CD4-positive, alpha-beta memory T cell (primary cell): ENCODE measurements at regions of chr1 and their contacts with region 1.

Region 1: DNA sequence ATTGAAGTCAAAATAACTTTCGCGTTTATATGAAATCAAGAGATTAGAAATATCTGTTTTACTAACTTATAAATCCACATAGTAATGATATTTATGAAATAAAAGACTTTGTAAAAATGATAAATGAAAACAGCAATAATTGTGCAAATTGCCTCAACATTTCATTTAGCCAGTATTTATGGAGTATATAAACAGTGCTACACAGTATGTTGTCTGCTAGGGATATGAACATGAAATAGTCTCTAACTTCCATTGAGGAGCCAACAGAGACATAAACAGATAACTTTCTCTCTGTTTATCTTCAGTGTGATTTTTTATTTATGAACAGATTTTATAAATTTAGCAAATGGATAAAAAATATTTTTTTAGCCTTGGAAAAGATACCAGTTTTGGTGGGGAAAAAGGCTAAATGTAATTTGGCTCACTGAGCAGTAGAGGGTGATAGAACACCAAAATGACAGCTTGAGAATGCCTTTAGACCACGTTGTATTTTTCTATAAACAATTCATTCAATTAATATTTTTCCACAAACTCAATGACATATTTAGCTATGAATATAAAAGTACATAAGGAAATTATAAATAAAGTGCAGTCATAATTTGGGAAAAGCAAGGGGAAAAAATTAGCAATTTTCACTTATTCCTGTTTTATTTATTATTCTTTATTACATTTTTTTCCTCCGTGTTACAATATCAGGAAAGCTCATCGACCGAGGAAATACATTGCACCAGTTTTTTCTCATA is 47.5 kb upstream of the EEIG2 start:
- DNase-seq: peak; percentile 35 to 58 (median 53)
- H3K4me3 ChIP-seq: no peak overlapping the region
- H3K4me3 Mint-ChIP-seq: no peak overlapping the region
- H3K27ac ChIP-seq: no peak overlapping the region
- H3K27ac Mint-ChIP-seq: no peak overlapping the region
- H3K4me1 ChIP-seq: no peaks in the 10 kb centered on the region
- H3K4me1 Mint-ChIP-seq: no peaks in the 10 kb centered on the region
- H3K27me3 ChIP-seq: no peaks in the 10 kb centered on the region
- H3K27me3 Mint-ChIP-seq: peaks cover 3 to 5% of the 10 kb centered on the region in 2 donors

Region 2: DNA sequence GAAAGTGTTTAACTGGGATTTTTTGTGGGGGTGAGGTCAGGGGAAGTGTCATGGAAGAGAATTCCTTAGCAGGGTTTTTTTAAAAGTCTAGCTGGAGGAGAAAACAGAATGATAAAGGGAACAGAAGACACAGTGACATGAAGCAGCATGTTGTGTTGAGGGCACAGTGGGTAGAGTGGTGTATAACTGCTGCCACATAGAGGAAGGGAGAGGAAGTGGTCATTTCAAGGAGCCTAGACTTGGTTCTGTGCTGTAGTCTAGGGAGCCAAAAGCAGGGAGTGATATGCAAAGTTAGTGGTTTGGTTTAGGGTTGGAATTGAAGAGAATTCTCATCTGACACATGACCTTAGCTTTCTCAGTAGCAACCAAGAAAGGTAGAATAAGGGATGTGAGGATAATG is 57.7 kb after region 1 on chr1:
- CTCF ChIA-PET with region 1: interaction called, 11 read pairs
- POLR2A ChIA-PET with region 1: no interaction called
- intact Hi-C with region 1: no loop called
- DNase-seq: peak in 4 of 5 donors; percentile 19 to 39 (median 32)
- H3K4me3 ChIP-seq: no peak overlapping the region
- H3K4me3 Mint-ChIP-seq: no peak overlapping the region
- H3K27ac ChIP-seq: no peak overlapping the region
- H3K27ac Mint-ChIP-seq: no peak overlapping the region
- H3K4me1 ChIP-seq: peaks cover 13% of the 10 kb centered on the region
- H3K4me1 Mint-ChIP-seq: peaks cover 0 to 7% (median 4%) of the 10 kb centered on the region in 4 donors
- H3K27me3 ChIP-seq: no peaks in the 10 kb centered on the region
- H3K27me3 Mint-ChIP-seq: no peaks in the 10 kb centered on the region

Region 3: DNA sequence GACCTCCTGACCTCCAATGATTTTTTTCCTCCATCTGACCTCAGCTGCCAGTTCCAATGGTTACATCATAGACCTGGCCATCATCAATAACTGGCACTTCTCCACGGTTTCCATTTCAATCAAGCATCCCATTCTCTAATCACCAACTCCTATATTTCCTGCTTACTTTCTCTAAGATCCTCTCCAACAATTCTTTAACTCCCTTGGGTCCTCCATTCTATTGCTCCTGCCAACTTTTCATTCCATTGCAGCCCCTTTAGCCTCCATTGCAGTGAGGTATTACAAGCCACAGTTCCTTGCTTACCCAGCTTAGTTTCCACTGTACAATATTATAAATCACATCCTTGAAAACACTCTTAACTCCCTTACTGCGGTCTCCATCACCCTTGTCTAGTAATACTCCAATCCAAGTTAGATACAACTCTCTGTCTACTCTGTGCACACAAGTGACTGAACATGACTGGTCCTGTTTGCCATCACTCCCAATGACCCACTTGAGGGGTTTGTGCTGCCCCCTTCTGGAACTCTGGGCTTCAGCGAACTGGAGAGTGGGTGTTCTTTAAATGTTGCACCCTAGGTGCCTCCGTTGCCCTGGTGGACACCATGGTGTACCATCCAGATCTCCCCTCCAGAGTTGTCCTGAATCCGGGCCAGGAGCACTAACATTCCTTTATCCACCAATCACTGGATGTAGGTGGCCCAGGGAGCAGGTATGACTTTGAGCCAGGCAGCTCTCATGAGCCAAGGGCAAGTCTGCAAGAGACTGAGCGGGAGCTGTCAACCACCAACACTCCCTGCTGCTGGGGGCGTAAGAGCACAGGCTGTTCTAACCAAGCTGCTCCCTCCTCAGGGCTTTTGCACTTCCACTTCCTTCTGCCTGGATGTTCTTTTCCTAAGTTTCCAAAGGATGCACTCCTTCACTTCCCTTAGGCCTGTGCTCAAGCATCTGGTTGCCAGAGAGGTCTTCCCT is 196.6 kb after region 1 on chr1:
- CTCF ChIA-PET with region 1: interaction called, 4 read pairs
- POLR2A ChIA-PET with region 1: no interaction called
- intact Hi-C with region 1: loop called (anchors 1 kb)
- DNase-seq: peak; percentile 65 to 70 (median 67)
- H3K4me3 ChIP-seq: no peak overlapping the region
- H3K4me3 Mint-ChIP-seq: peak overlapping the region in 1 of 8 donors; percentile 7
- H3K27ac ChIP-seq: no peak overlapping the region
- H3K27ac Mint-ChIP-seq: peak overlapping the region in 6 of 7 donors; percentile 32 to 63 (median 61)
- H3K4me1 ChIP-seq: peaks cover 35% of the 10 kb centered on the region
- H3K4me1 Mint-ChIP-seq: peaks cover 19 to 45% (median 35%) of the 10 kb centered on the region in 4 donors
- H3K27me3 ChIP-seq: no peaks in the 10 kb centered on the region
- H3K27me3 Mint-ChIP-seq: no peaks in the 10 kb centered on the region

Region 4: GRCh38 chr1:108816049-108816893 is 303.9 kb after region 1 on chr1:
- CTCF ChIA-PET with region 1: no interaction called
- POLR2A ChIA-PET with region 1: no interaction called
- intact Hi-C with region 1: no loop called
- DNase-seq: no peak
- H3K4me3 ChIP-seq: no peak overlapping the region
- H3K4me3 Mint-ChIP-seq: no peak overlapping the region
- H3K27ac ChIP-seq: no peak overlapping the region
- H3K27ac Mint-ChIP-seq: no peak overlapping the region
- H3K4me1 ChIP-seq: no peaks in the 10 kb centered on the region
- H3K4me1 Mint-ChIP-seq: no peaks in the 10 kb centered on the region
- H3K27me3 ChIP-seq: no peaks in the 10 kb centered on the region
- H3K27me3 Mint-ChIP-seq: peaks cover 2 to 5% of the 10 kb centered on the region in 2 donors

Region 5: GRCh38 chr1:108846001-108846400 is 333.6 kb after region 1 on chr1:
- CTCF ChIA-PET with region 1: no interaction called
- POLR2A ChIA-PET with region 1: no interaction called
- intact Hi-C with region 1: no loop called
- DNase-seq: no peak
- H3K4me3 ChIP-seq: no peak overlapping the region
- H3K4me3 Mint-ChIP-seq: no peak overlapping the region
- H3K27ac ChIP-seq: no peak overlapping the region
- H3K27ac Mint-ChIP-seq: no peak overlapping the region
- H3K4me1 ChIP-seq: no peaks in the 10 kb centered on the region
- H3K4me1 Mint-ChIP-seq: no peaks in the 10 kb centered on the region
- H3K27me3 ChIP-seq: no peaks in the 10 kb centered on the region
- H3K27me3 Mint-ChIP-seq: no peaks in the 10 kb centered on the region

Region 6: GRCh38 chr1:109133815-109134214 is 621.4 kb after region 1 on chr1:
- CTCF ChIA-PET with region 1: no interaction called
- POLR2A ChIA-PET with region 1: no interaction called
- intact Hi-C with region 1: no loop called
- DNase-seq: no peak
- H3K4me3 ChIP-seq: no peak overlapping the region
- H3K4me3 Mint-ChIP-seq: no peak overlapping the region
- H3K27ac ChIP-seq: no peak overlapping the region
- H3K27ac Mint-ChIP-seq: peak overlapping the region in 1 of 7 donors; percentile 18
- H3K4me1 ChIP-seq: no peaks in the 10 kb centered on the region
- H3K4me1 Mint-ChIP-seq: peaks cover 0 to 6% (median 2%) of the 10 kb centered on the region in 4 donors
- H3K27me3 ChIP-seq: no peaks in the 10 kb centered on the region
- H3K27me3 Mint-ChIP-seq: no peaks in the 10 kb centered on the region